ENCODE measurements at regions of chr5 and their contacts with region 1.

Region 1: GRCh38 chr5:158777647-158778350 is 321.9 kb downstream of the EBF1 start:
- DNase-seq: no peak
- ATAC-seq: no peak
- H3K4me3 ChIP-seq: no peak overlapping the region
- H3K4me3 Mint-ChIP-seq: peak overlapping the region; percentile 27
- H3K27ac ChIP-seq: peak overlapping the region in 1 of 2 donors; percentile 10
- H3K27ac Mint-ChIP-seq: peak overlapping the region; percentile 64
- H3K4me1 ChIP-seq: peaks cover 82 to 89% of the 10 kb centered on the region in 2 donors
- H3K4me1 Mint-ChIP-seq: peaks cover 89% of the 10 kb centered on the region
- H3K27me3 ChIP-seq: no peaks in the 10 kb centered on the region
- H3K27me3 Mint-ChIP-seq: no peaks in the 10 kb centered on the region
- CTCF ChIP-seq: no peak

Region 2: DNA sequence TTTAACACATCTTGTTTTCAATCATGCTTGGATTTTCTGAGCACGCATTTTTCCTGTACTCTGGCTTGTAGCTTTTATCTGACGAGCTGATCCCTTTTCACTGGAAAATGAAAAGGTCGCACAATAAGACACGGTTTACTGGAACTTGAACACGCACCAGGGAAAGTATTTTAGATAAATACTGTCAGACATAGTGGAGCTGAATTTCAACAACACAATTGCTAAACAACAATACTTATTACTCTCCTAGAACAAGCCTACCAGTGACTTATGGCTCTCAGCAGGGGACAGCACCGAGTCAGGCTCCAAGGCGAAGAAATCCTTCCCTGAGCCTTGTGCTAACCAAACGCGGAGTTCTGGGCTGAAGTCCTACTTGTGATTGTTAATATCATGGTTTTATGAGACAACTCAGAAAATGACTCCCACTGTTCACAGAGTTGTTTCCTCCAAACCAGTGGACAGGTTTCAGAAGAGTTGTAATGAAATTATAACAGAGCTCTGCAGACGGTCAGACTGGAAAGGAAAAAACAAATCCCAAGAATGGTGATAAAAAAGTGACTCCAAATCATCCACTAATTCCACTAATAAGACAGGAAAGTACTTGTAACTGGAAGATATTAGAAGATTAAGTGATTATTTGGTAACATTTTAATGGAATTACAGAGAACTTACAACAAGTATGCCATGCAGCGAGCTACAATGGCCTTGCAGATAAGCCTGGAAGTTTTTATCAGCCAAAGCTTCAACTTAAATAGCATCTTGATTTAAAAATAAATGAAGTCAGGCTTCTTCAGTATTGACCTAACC is 37.6 kb before region 1 on chr5:
- CTCF ChIA-PET with region 1: no interaction called
- POLR2A ChIA-PET with region 1: no interaction called
- intact Hi-C with region 1: loop called (anchors 5 kb)
- DNase-seq: no peak
- ATAC-seq: no peak
- H3K4me3 ChIP-seq: no peak overlapping the region
- H3K4me3 Mint-ChIP-seq: no peak overlapping the region
- H3K27ac ChIP-seq: no peak overlapping the region
- H3K27ac Mint-ChIP-seq: no peak overlapping the region
- H3K4me1 ChIP-seq: peaks cover 30 to 34% of the 10 kb centered on the region in 2 donors
- H3K4me1 Mint-ChIP-seq: peaks cover 54% of the 10 kb centered on the region
- H3K27me3 ChIP-seq: no peaks in the 10 kb centered on the region
- H3K27me3 Mint-ChIP-seq: no peaks in the 10 kb centered on the region
- CTCF ChIP-seq: no peak

Measured in B cell (primary cell).